ENCODE measurements at regions of chr2 and their contacts with region 1.

Region 1: GRCh38 chr2:38315707-38316333 is 61.3 kb downstream of the ATL2 start:
- DNase-seq: peak; percentile 59
- CTCF ChIP-seq: peak; percentile 53

Region 2: GRCh38 chr2:38352336-38352735 is 36.5 kb after region 1 on chr2:
- in situ Hi-C with region 1: no loop called
- DNase-seq: no peak
- CTCF ChIP-seq: no peak

Region 3: GRCh38 chr2:38508311-38509039 is 192.7 kb after region 1 on chr2:
- in situ Hi-C with region 1: loop called (anchors 10 kb)
- DNase-seq: peak; percentile 80
- CTCF ChIP-seq: peak; percentile 82

Region 4: DNA sequence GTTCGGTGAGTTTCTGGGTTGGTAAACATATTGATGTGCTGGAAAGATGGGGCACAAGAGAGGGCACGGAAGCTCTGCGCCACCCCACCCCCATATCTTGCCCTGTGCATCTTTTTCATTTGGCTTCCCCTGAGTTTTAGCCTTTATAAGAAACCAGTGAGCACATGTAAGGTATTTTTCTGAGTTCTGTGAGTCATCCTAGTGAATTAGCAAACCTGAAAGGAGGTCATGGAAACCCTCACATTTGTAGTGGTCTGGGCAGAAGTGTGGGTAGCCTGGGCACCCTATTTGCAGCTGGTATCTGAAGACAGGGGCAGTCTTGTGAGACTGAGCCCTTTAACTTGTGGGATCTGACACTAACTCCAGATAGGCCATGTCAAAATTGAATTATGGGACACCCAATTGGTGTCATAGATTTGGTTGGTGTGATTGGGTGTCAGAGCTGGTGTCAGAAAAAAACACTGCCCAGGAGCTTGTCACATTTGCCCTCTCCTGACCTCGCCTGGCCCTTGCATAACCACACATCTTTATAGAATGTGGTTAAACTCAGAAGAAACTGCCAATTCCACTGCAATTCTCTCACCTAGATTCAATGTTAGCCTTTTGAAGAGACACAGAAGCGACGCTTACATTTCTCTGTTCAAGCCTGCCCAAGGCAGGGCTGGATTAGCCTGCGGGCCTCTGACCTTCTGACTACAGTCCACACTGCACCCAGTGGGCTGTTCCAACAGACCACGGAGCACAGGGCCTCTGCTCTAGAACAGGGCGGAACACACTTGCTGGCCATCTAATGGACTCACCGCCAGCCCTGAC is 338.1 kb after region 1 on chr2:
- in situ Hi-C with region 1: no loop called
- DNase-seq: no peak
- CTCF ChIP-seq: no peak